Naive thymus-derived CD4-positive, alpha-beta T cell (primary cell): ENCODE measurements at regions of chr14 and their contacts with region 1.

Region 1: GRCh38 chr14:53152890-53153701 is at the start of gene DDHD1:
- DNase-seq: peak; percentile 76 to 88 (median 85)
- ATAC-seq: peak; percentile 95
- H3K4me3 ChIP-seq: peak within 1 kb of the TSS; percentile 86
- H3K4me3 Mint-ChIP-seq: peak within 1 kb of the TSS; percentile 95 to 100 (median 98)
- H3K27ac ChIP-seq: peak within 1 kb of the TSS; percentile 87
- H3K27ac Mint-ChIP-seq: peak within 1 kb of the TSS; percentile 94 to 99 (median 98)
- H3K4me1 ChIP-seq: peaks cover 32 to 34% of the 10 kb centered on the region in 2 donors
- H3K4me1 Mint-ChIP-seq: peaks cover 34 to 55% (median 51%) of the 10 kb centered on the region in 7 donors
- H3K27me3 ChIP-seq: no peaks in the 10 kb centered on the region
- H3K27me3 Mint-ChIP-seq: no peaks in the 10 kb centered on the region
- total RNA-seq, gene DDHD1: 46.7 to 103 (median 55.5) TPM

Region 2: GRCh38 chr14:51989293-51990234 is 1163.5 kb before region 1 on chr14 and contains the start of gene RTRAF:
- CTCF ChIA-PET with region 1: no interaction called
- POLR2A ChIA-PET with region 1: no interaction called
- intact Hi-C with region 1: loop called in 1 of 2 experiments (anchors 2 kb)
- DNase-seq: peak; percentile 86 to 93 (median 91)
- ATAC-seq: peak; percentile 98
- H3K4me3 ChIP-seq: peak within 1 kb of the TSS; percentile 60
- H3K4me3 Mint-ChIP-seq: peak within 1 kb of the TSS; percentile 93 to 97 (median 95)
- H3K27ac ChIP-seq: peak within 1 kb of the TSS; percentile 88
- H3K27ac Mint-ChIP-seq: peak within 1 kb of the TSS; percentile 91 to 99 (median 95)
- H3K4me1 ChIP-seq: peaks cover 19 to 22% of the 10 kb centered on the region in 2 donors
- H3K4me1 Mint-ChIP-seq: peaks cover 20 to 57% (median 50%) of the 10 kb centered on the region in 7 donors
- H3K27me3 ChIP-seq: no peaks in the 10 kb centered on the region
- H3K27me3 Mint-ChIP-seq: peaks cover 0 to 4% (median 0%) of the 10 kb centered on the region in 5 donors
- total RNA-seq, gene RTRAF: 112 to 180 (median 116) TPM

Region 3: DNA sequence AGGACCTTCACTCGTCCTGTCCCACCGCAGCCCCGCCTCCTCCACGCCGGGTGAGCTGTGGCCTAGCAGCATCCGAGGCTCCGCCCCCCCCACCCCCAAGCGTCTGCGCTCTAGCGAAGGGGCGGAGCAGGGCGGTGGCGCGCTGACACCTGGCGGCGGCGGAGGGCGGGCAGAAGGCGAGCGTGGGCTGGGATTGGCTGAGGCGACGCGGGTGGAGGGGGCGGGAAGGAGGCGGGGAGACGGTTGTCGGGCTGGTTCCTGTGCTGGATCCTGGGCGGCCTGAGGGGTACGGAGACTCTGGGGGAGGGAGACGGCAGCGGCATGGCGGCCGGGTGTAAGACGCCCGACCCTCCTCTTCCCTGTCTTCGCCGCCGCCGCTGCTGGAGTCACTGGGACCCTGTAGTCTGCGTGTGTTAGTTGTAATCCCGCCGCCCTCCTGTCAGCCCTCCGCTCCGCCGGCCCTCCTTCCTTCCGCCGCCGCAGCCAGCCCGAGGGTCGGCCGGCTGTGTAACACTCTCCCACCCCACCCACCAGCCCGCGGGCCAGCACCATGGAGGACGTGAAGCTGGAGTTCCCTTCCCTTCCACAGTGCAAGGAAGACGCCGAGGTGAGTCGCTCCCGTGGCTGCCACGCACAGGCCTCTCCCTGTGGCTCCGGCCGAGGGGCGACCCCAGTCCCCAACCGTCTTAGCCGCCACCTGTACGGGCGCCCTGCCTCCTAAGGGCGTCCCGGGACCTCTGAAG is 423.0 kb before region 1 on chr14 and contains the start of gene STYX:
- CTCF ChIA-PET with region 1: no interaction called
- POLR2A ChIA-PET with region 1: interaction called, 3 read pairs
- intact Hi-C with region 1: loop called (anchors 2 to 5 kb)
- DNase-seq: peak; percentile 91 to 97 (median 94)
- ATAC-seq: peak; percentile 99
- H3K4me3 ChIP-seq: peak within 1 kb of the TSS; percentile 88
- H3K4me3 Mint-ChIP-seq: peak within 1 kb of the TSS; percentile 87 to 95 (median 94)
- H3K27ac ChIP-seq: peak within 1 kb of the TSS; percentile 94
- H3K27ac Mint-ChIP-seq: peak within 1 kb of the TSS; percentile 84 to 97 (median 89)
- H3K4me1 ChIP-seq: peaks cover 14 to 16% of the 10 kb centered on the region in 2 donors
- H3K4me1 Mint-ChIP-seq: peaks cover 18 to 40% (median 33%) of the 10 kb centered on the region in 7 donors
- H3K27me3 ChIP-seq: no peaks in the 10 kb centered on the region
- H3K27me3 Mint-ChIP-seq: no peaks in the 10 kb centered on the region
- total RNA-seq, gene STYX: 23.9 to 45.3 (median 29.2) TPM

Region 4: GRCh38 chr14:52923902-52924575 is 229.1 kb before region 1 on chr14:
- CTCF ChIA-PET with region 1: no interaction called
- POLR2A ChIA-PET with region 1: no interaction called
- intact Hi-C with region 1: no loop called
- DNase-seq: no peak
- ATAC-seq: no peak
- H3K4me3 ChIP-seq: no peak overlapping the region
- H3K4me3 Mint-ChIP-seq: no peak overlapping the region
- H3K27ac ChIP-seq: no peak overlapping the region
- H3K27ac Mint-ChIP-seq: no peak overlapping the region
- H3K4me1 ChIP-seq: peaks cover 6% of the 10 kb centered on the region in 2 donors
- H3K4me1 Mint-ChIP-seq: peaks cover 7 to 11% (median 8%) of the 10 kb centered on the region in 7 donors
- H3K27me3 ChIP-seq: no peaks in the 10 kb centered on the region
- H3K27me3 Mint-ChIP-seq: peaks cover 0 to 11% (median 0%) of the 10 kb centered on the region in 5 donors

Region 5: DNA sequence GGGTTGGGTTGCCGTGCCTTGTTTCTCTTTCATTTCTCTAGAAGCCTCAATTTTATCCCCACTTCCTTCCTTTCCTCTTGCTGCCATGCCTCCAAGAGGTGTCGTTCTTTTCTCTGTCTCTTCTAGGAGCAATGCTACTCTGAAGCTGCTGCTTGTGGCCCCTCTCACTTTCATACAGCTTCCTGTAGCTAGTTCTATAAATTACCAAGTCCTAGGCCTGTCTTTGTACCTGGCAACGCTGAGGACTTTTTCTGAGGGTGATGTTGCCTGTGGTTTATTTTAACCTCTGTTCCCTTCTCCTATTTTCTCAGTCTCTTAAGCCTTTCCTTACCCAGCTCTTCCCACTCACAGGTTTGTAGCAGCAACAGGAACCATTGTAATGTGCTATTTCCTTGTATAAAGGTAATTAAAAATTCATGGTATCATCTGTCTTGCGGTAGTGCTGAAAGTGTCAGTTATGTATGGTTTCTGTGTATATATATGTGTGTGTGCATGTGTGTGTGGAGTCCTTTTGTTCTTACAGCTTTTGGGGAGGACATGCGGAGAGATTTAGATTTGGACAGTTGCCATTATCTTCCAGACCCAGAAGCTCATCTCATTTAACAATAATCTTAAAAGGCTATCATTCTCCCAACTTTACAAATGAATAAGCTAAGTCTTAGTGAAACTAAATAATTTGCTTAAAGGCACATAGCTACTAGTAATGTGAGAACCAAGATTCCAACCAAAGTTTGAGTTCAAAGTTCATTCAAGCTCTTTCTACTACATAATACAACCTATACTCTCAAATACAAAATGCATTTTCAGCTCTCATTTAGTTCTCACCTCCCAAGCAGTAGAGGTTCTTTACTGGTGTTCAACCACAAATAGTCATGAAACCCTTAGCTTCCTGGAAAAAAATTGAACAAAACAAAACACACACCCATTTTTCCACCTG is 43.7 kb before region 1 on chr14:
- CTCF ChIA-PET with region 1: interaction called, 13 read pairs
- POLR2A ChIA-PET with region 1: interaction called, 65 read pairs
- intact Hi-C with region 1: loop called (anchors 1 kb)
- DNase-seq: peak in 8 of 9 donors; percentile 37 to 62 (median 57)
- ATAC-seq: peak; percentile 85
- H3K4me3 ChIP-seq: peak overlapping the region; percentile 70
- H3K4me3 Mint-ChIP-seq: no peak overlapping the region
- H3K27ac ChIP-seq: peak overlapping the region; percentile 67
- H3K27ac Mint-ChIP-seq: no peak overlapping the region
- H3K4me1 ChIP-seq: peaks cover 28 to 29% of the 10 kb centered on the region in 2 donors
- H3K4me1 Mint-ChIP-seq: peaks cover 10 to 46% (median 16%) of the 10 kb centered on the region in 7 donors
- H3K27me3 ChIP-seq: no peaks in the 10 kb centered on the region
- H3K27me3 Mint-ChIP-seq: no peaks in the 10 kb centered on the region

Region 6: GRCh38 chr14:53180268-53181221 is 27.4 kb after region 1 on chr14:
- CTCF ChIA-PET with region 1: interaction called, 3 read pairs
- POLR2A ChIA-PET with region 1: no interaction called
- intact Hi-C with region 1: loop called (anchors 1 to 2 kb)
- DNase-seq: peak in 3 of 9 donors; percentile 16 to 52 (median 35)
- ATAC-seq: peak; percentile 79
- H3K4me3 ChIP-seq: no peak overlapping the region
- H3K4me3 Mint-ChIP-seq: peak overlapping the region in 2 of 10 donors; percentile 0 to 16
- H3K27ac ChIP-seq: no peak overlapping the region
- H3K27ac Mint-ChIP-seq: peak overlapping the region in 2 of 9 donors; percentile 25 to 86
- H3K4me1 ChIP-seq: no peaks in the 10 kb centered on the region
- H3K4me1 Mint-ChIP-seq: peaks cover 0 to 23% (median 5%) of the 10 kb centered on the region in 7 donors
- H3K27me3 ChIP-seq: no peaks in the 10 kb centered on the region
- H3K27me3 Mint-ChIP-seq: peaks cover 0 to 6% (median 0%) of the 10 kb centered on the region in 5 donors

Region 7: DNA sequence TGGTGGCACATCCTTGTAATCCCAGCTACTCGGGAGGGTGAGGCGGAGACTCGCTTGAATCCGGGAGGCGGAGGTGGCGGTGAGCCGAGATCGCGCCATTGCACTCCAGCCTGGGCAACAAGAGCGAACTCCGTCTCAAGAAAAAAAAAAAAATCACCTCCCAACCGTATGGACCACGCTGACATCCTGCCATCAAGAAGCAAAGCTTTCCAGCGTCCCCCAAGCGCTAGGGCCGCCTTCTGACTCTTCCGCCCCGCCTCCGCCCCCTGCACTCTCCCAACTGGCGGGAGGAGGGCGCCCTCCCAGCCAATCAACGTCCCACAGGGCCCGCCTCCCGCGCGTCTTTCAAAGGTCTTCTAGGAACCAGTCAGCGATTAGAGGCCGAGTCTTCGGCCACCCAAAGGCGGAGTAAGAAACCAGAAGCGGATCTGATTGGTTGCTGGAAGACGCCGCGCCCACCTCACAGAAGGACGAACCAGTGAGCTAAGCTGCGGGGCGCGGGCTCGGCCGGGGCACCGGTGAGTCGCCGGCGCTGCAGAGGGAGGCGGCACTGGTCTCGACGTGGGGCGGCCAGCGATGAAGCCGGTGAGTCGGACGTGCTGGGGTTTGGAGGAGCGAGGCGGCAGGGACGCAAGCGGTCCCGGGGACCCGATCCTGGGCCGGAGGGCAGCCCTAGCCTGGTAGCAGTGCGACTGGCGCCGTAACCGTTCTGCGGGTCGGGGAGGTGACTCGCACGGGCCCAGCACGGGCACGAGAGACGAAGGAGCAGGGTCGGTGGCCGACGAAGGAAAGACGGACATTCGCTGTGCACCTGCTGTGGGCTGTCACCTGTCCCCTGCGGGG is 1243.6 kb after region 1 on chr14 and contains the start of gene CDKN3:
- CTCF ChIA-PET with region 1: no interaction called
- POLR2A ChIA-PET with region 1: no interaction called
- intact Hi-C with region 1: loop called (anchors 2 to 5 kb)
- DNase-seq: peak; percentile 91 to 96 (median 95)
- ATAC-seq: peak; percentile 98
- H3K4me3 ChIP-seq: peak within 1 kb of the TSS; percentile 85
- H3K4me3 Mint-ChIP-seq: peak within 1 kb of the TSS; percentile 81 to 96 (median 90)
- H3K27ac ChIP-seq: peak within 1 kb of the TSS; percentile 46
- H3K27ac Mint-ChIP-seq: peak within 1 kb of the TSS; percentile 24 to 93 (median 83)
- H3K4me1 ChIP-seq: peaks cover 0 to 9% of the 10 kb centered on the region in 2 donors
- H3K4me1 Mint-ChIP-seq: peaks cover 0 to 38% (median 12%) of the 10 kb centered on the region in 7 donors
- H3K27me3 ChIP-seq: no peaks in the 10 kb centered on the region
- H3K27me3 Mint-ChIP-seq: peaks cover 0 to 2% (median 0%) of the 10 kb centered on the region in 5 donors
- total RNA-seq, gene CDKN3: 0.93 to 48.1 (median 3.0) TPM

Region 8: GRCh38 chr14:54902521-54903420 is 1749.7 kb after region 1 on chr14 and contains the start of gene GCH1:
- CTCF ChIA-PET with region 1: no interaction called
- POLR2A ChIA-PET with region 1: no interaction called
- intact Hi-C with region 1: loop called in 1 of 2 experiments (anchors 10 kb)
- DNase-seq: peak; percentile 63 to 85 (median 71)
- ATAC-seq: peak; percentile 88
- H3K4me3 ChIP-seq: peak within 1 kb of the TSS; percentile 99
- H3K4me3 Mint-ChIP-seq: peak within 1 kb of the TSS; percentile 82 to 94 (median 90)
- H3K27ac ChIP-seq: peak within 1 kb of the TSS; percentile 88
- H3K27ac Mint-ChIP-seq: peak within 1 kb of the TSS; percentile 66 to 95 (median 91)
- H3K4me1 ChIP-seq: peaks cover under 1 to 9% of the 10 kb centered on the region in 2 donors
- H3K4me1 Mint-ChIP-seq: peaks cover 15 to 43% (median 31%) of the 10 kb centered on the region in 7 donors
- H3K27me3 ChIP-seq: no peaks in the 10 kb centered on the region
- H3K27me3 Mint-ChIP-seq: no peaks in the 10 kb centered on the region
- total RNA-seq, gene GCH1: 21.4 to 64.1 (median 23.2) TPM